HEK293 (cell line): ENCODE measurements at regions of chr2 and their contacts with region 1.

Region 1: GRCh38 chr2:85490861-85491755 is 47.9 kb upstream of the MAT2A start:
- H3K4me3 ChIP-seq: no peak overlapping the region
- H3K27ac ChIP-seq: no peak overlapping the region
- H3K4me1 ChIP-seq: no peaks in the 10 kb centered on the region
- CTCF ChIP-seq: no peak

Region 2: GRCh38 chr2:85531585-85531984 is 40.5 kb after region 1 on chr2:
- CTCF ChIA-PET with region 1: interaction called, 3 read pairs
- POLR2A ChIA-PET with region 1: interaction called, 11 read pairs
- H3K4me3 ChIP-seq: no peak overlapping the region
- H3K27ac ChIP-seq: no peak overlapping the region
- H3K4me1 ChIP-seq: no peaks in the 10 kb centered on the region
- CTCF ChIP-seq: no peak